H1 (cell line): ENCODE measurements at regions of chr18 and their contacts with region 1.

Region 1: DNA sequence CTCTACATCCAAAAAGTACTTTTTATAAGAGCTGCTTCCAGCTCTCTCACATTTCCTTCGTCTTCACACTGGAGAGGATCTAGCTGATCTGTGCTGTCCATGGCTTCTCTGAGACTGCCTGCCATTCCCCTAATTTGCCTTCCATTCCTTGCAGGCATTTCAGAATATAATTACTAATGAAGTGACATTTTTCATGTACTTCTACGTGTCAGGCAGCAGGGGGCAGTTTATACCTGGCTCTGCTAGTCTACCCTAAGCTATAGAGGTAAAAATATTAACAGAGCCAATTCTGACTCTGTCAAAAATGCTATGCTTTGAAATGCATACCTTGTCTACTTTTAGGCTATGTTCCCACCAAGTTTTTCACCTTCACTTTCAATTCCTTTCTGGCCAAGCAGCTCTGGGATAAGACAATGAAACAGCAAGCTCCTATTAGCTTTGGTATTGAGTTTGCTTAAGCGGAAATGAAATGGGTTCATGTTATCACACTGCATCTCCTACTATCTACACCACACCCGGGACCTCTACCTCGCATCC is 81.9 kb downstream of the MEP1B start:
- DNase-seq: no peak
- H3K4me3 ChIP-seq: no peak overlapping the region
- H3K27ac ChIP-seq: no peak overlapping the region
- H3K4me1 ChIP-seq: peaks cover 0 to 3% (median under 1%) of the 10 kb centered on the region in 4 experiments; a peak in 3 of 7 replicates
- H3K27me3 ChIP-seq: no peaks in the 10 kb centered on the region
- CTCF ChIP-seq: peak in 2 of 3 experiments; percentile 51 to 68; a peak in 2 of 4 replicates
- EP300 ChIP-seq: no peak
- POLR2A ChIP-seq: no peak
- RAD21 ChIP-seq: peak; percentile 80 to 82

Region 2: GRCh38 chr18:32060026-32060425 is 211.7 kb before region 1 on chr18:
- CTCF ChIA-PET with region 1: no interaction called
- POLR2A ChIA-PET with region 1: no interaction called
- DNase-seq: no peak
- H3K4me3 ChIP-seq: no peak overlapping the region
- H3K27ac ChIP-seq: no peak overlapping the region
- H3K4me1 ChIP-seq: peaks cover 0 to 3% (median 1%) of the 10 kb centered on the region in 4 experiments; a peak in 1 of 7 replicates
- H3K27me3 ChIP-seq: no peaks in the 10 kb centered on the region
- CTCF ChIP-seq: no peak
- EP300 ChIP-seq: no peak
- POLR2A ChIP-seq: no peak
- RAD21 ChIP-seq: no peak

Region 3: DNA sequence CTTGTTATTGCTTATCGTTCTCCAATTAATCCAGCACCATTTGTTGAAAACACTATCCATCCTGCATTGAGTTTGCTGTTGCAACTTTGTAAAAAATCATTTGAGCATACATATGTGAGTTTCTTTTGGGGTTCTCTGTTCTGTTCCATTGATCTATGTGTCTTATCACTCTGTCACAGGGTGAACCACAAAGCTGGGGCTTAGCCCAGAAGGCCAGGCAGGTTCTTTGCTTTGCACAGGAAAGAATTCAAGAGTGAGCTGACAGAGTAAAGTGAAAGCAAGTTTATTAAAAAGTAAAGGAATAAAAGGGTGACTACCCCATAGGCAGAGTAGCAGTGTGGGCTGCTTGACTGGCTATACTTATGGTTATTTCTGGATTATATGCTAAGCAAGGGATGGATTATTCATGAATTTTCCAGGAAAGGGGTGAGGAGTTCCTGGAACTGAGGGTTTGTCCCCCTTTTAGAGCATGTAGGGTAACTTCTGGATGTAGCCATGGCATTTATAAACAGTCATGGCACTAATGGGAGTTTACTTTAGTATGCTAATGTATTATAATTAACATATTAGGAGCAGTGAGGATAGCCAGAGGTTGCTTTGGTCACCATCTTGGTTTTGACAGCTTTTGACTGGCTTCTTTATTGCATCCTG is 133.3 kb before region 1 on chr18:
- CTCF ChIA-PET with region 1: no interaction called
- POLR2A ChIA-PET with region 1: no interaction called
- DNase-seq: no peak
- H3K4me3 ChIP-seq: no peak overlapping the region
- H3K27ac ChIP-seq: no peak overlapping the region
- H3K4me1 ChIP-seq: no peaks in the 10 kb centered on the region
- H3K27me3 ChIP-seq: no peaks in the 10 kb centered on the region
- CTCF ChIP-seq: no peak
- EP300 ChIP-seq: no peak
- POLR2A ChIP-seq: no peak
- RAD21 ChIP-seq: no peak

Region 4: DNA sequence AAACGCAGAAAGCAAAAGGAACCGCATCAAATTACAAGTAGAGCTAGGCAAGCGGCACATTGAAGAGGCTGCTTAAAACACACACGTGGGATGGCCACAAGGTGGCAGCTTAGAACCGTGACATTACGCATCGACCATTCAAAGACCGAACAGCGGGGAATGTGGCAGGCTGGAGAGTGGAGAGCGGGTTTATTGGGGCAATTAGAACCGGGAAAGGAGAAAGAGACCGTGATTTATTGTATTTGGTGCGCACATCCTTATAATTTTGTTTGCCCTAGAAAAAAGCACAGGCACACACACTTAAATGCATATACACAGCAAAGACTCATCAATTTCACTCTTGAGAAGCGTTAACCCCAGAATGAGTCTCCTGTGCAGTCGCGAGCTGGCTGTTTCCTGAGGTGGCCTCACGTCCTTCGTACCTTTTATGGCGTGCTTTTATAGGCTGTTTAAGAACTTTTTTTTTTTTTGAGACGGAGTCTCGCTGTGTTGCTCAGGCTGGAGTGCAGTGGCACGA is 113.6 kb before region 1 on chr18:
- CTCF ChIA-PET with region 1: interaction called, 13 read pairs
- POLR2A ChIA-PET with region 1: no interaction called
- DNase-seq: peak; percentile 76
- H3K4me3 ChIP-seq: peak overlapping the region in 2 of 4 experiments; percentile 5 to 39; a peak in 2 of 8 replicates
- H3K27ac ChIP-seq: no peak overlapping the region
- H3K4me1 ChIP-seq: no peaks in the 10 kb centered on the region
- H3K27me3 ChIP-seq: no peaks in the 10 kb centered on the region
- CTCF ChIP-seq: peak; percentile 74 to 96 (median 93)
- EP300 ChIP-seq: no peak
- POLR2A ChIP-seq: no peak
- RAD21 ChIP-seq: peak; percentile 99

Region 5: GRCh38 chr18:32238635-32239268 is 33.0 kb before region 1 on chr18:
- CTCF ChIA-PET with region 1: interaction called, 18 read pairs
- POLR2A ChIA-PET with region 1: no interaction called
- DNase-seq: no peak
- H3K4me3 ChIP-seq: no peak overlapping the region
- H3K27ac ChIP-seq: no peak overlapping the region
- H3K4me1 ChIP-seq: peaks cover 2 to 12% (median 4%) of the 10 kb centered on the region in 4 experiments; a peak in 3 of 7 replicates
- H3K27me3 ChIP-seq: no peaks in the 10 kb centered on the region
- CTCF ChIP-seq: peak; percentile 10 to 50 (median 43); a peak in 3 of 4 replicates
- EP300 ChIP-seq: no peak
- POLR2A ChIP-seq: no peak
- RAD21 ChIP-seq: peak; percentile 21 to 51; a peak in 3 of 4 replicates

Region 6: GRCh38 chr18:32284284-32284683 is 12.5 kb after region 1 on chr18:
- CTCF ChIA-PET with region 1: interaction called, 56 read pairs
- POLR2A ChIA-PET with region 1: interaction called, 4 read pairs
- DNase-seq: no peak
- H3K4me3 ChIP-seq: no peak overlapping the region
- H3K27ac ChIP-seq: no peak overlapping the region
- H3K4me1 ChIP-seq: 0 out of 7 replicates have a peak, but pooled peaks cover 0 to 4% (median 0%) of the 10 kb centered on the region in 4 experiments
- H3K27me3 ChIP-seq: no peaks in the 10 kb centered on the region
- CTCF ChIP-seq: no peak
- EP300 ChIP-seq: no peak
- POLR2A ChIP-seq: no peak
- RAD21 ChIP-seq: no peak

Region 7: GRCh38 chr18:32301976-32302743 is 30.4 kb after region 1 on chr18:
- CTCF ChIA-PET with region 1: no interaction called
- POLR2A ChIA-PET with region 1: no interaction called
- DNase-seq: no peak
- H3K4me3 ChIP-seq: no peak overlapping the region
- H3K27ac ChIP-seq: no peak overlapping the region
- H3K4me1 ChIP-seq: no peaks in the 10 kb centered on the region
- H3K27me3 ChIP-seq: no peaks in the 10 kb centered on the region
- CTCF ChIP-seq: no peak
- EP300 ChIP-seq: no peak
- POLR2A ChIP-seq: no peak
- RAD21 ChIP-seq: no peak

Region 8: GRCh38 chr18:32454593-32454992 is 182.9 kb after region 1 on chr18:
- CTCF ChIA-PET with region 1: no interaction called
- POLR2A ChIA-PET with region 1: no interaction called
- DNase-seq: no peak
- H3K4me3 ChIP-seq: no peak overlapping the region
- H3K27ac ChIP-seq: no peak overlapping the region
- H3K4me1 ChIP-seq: no peaks in the 10 kb centered on the region; a peak in 1 of 7 replicates
- H3K27me3 ChIP-seq: no peaks in the 10 kb centered on the region
- CTCF ChIP-seq: no peak
- EP300 ChIP-seq: no peak
- POLR2A ChIP-seq: no peak
- RAD21 ChIP-seq: no peak

Region 9: GRCh38 chr18:32470713-32471633 is 199.2 kb after region 1 on chr18 and contains the start of gene GAREM1:
- CTCF ChIA-PET with region 1: interaction called, 30 read pairs
- POLR2A ChIA-PET with region 1: interaction called, 3 read pairs
- DNase-seq: peak; percentile 83 to 91
- H3K4me3 ChIP-seq: peak within 1 kb of the TSS; percentile 87 to 98 (median 90)
- H3K27ac ChIP-seq: peak within 1 kb of the TSS; percentile 70; the same call in 1 of the 2 replicates
- H3K4me1 ChIP-seq: peaks cover 3 to 12% (median 6%) of the 10 kb centered on the region in 4 experiments
- H3K27me3 ChIP-seq: peaks cover 0 to 14% (median 9%) of the 10 kb centered on the region in 4 experiments; a peak in 4 of 7 replicates
- CTCF ChIP-seq: peak; percentile 50 to 60 (median 55)
- EP300 ChIP-seq: no peak
- POLR2A ChIP-seq: peak; percentile 72 to 88
- RAD21 ChIP-seq: peak; percentile 48 to 71
- total RNA-seq, gene GAREM1: 9.2 and 9.6 TPM in 2 replicates